Prostate gland (tissue), 2 donors: ENCODE measurements at regions of chr22 and their contacts with region 1.

Region 1: DNA sequence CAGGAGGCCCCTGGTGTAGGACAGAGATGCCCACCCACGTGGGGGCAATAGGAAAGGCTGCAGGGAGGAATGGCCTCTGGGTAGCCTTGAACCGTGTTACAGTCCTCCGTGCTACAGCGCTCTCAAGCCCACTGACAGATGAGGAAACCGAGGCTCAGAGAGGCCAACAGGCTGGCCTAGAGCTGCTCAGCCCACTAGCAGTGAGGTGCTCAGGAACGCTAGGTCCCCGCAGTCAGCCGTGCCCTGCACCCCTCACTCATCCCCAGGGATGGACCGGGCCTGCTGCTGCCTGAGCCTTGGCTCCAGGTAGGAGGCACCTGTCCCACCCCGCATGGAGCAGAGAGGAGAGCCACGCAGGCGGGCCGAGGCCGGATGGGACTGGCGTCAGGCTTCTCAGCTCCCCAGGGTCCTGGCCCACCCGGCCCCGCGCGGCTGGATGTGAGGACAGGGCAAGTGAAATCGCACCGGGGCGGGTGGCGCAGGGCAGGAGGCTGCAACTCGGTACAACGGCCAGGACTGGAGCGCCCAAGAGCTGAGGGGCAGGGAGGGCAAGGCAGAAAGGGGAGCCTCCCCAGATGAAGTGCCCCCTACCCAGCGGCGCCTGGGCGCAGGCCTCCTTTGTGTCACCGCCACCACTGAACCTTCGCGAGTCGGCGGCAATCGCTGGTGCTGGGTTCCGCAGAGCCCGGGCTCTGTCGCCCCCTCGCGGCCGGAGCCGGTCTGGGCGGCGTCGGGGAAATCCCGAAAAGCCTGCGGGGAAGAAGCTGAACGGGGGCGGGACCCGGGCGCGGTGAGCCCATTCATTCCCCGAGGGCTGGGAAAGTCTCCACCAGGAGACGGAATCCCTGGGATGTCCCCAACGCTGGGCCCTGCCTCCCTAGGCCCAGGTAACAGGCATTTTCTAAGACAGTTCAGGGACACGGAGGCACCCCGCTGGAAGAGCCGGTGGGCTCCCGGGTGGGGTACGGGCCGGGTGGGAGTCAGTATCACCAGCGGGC is 8.4 kb upstream of the SLC2A11 start:
- DNase-seq: peak; percentile 66
- H3K4me3 ChIP-seq: no peak overlapping the region
- H3K27ac ChIP-seq: no peak overlapping the region
- H3K4me1 ChIP-seq: peaks cover 5% of the 10 kb centered on the region
- H3K27me3 ChIP-seq: no peaks in the 10 kb centered on the region
- CTCF ChIP-seq: peak; percentile 91 to 97 (median 96)
- POLR2A ChIP-seq: no peak

Region 2: DNA sequence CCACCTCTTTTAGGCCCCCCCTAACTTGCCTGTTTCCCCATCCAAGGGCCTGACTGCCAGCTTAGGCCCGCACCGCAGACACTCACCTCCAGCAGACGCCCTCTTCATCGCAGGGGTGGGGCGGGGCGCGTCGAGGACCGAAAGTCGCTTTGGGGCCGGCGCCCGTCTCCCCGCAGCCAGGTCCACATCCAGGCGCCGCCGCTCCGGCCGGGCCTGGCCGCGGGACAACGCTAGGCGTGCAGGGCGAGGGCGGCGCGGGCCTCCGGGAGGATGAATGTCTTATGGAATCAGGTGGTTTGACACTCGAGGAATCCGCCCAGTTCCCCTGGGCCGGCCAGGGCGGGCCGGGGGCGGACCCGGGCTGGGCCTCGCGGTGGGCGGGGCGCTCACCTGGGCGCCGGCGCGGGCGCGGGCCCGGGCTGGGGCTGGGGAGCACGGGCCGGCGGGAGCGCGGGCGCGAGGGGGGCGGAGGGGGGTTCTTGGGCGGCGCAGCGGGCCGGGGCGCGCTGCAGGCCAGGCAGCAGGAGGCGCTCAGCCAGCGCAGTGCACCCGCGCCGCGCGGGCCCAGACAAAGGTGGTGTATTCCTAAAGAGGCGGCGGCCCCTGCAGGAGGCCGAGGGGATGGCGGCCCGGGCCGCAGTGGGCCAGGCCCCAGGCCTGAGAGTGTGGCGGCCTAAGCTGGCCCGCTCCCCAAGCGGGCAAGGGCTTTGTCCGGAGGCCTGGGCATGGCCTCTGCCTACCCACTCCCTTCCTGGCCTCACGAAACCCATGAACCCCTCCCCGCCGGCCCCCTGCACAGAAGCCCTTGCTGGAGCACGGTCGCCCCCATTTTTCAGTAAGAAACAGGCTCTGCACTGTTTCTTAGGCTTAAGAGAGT is 446.8 kb before region 1 on chr22:
- intact Hi-C with region 1: loop called (anchors 5 kb)
- DNase-seq: peak; percentile 87
- H3K4me3 ChIP-seq: peak overlapping the region; percentile 40 to 56
- H3K27ac ChIP-seq: peak overlapping the region; percentile 65 to 66
- H3K4me1 ChIP-seq: peaks cover 4% of the 10 kb centered on the region
- H3K27me3 ChIP-seq: no peaks in the 10 kb centered on the region
- CTCF ChIP-seq: peak; percentile 26 to 90 (median 66)
- POLR2A ChIP-seq: peak; percentile 58

Region 3: DNA sequence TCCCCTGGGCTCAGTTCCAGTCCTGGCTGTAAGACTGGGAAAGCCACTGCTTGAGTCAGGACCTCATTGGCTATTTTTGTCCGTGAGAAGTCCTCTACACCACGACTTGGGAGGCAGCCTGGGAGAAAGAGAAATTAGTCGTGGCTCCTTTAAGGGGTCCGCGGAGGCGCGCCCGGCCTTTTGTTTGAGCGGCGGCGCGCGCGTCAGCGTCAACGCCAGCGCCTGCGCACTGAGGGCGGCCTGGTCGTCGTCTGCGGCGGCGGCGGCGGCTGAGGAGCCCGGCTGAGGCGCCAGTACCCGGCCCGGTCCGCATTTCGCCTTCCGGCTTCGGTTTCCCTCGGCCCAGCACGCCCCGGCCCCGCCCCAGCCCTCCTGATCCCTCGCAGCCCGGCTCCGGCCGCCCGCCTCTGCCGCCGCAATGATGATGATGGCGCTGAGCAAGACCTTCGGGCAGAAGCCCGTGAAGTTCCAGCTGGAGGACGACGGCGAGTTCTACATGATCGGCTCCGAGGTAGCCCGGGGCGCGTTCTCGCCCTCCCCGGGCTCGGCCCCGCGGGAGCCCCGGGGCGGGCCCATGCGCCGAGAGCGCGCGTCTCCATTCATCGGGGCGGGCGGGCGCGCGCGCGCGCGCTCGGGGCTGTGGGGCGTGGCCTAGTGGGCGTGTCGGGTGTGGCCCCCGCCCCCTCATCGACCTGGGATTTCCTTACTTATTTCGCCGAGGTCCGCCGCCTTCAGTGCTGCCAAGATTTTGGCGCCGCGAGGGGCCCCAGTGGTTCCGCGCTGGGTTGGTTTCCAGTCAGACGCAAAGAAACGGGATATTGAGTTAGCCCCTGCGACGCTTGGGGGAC is 62.3 kb before region 1 on chr22 and contains the start of gene SMARCB1:
- intact Hi-C with region 1: loop called (anchors 5 kb)
- DNase-seq: peak; percentile 85
- H3K4me3 ChIP-seq: peak within 1 kb of the TSS; percentile 95 to 97
- H3K27ac ChIP-seq: peak within 1 kb of the TSS; percentile 100
- H3K4me1 ChIP-seq: peaks cover 2% of the 10 kb centered on the region
- H3K27me3 ChIP-seq: no peaks in the 10 kb centered on the region
- CTCF ChIP-seq: peak in 2 of 4 experiments; percentile 11 to 16
- POLR2A ChIP-seq: peak; percentile 68
- total RNA-seq, gene SMARCB1: 77.2 to 136 TPM